ENCODE measurements at regions of chr17 and their contacts with region 1.

Region 1: GRCh38 chr17:29931231-29931932 is 1.4 kb upstream of the SSH2 start:
- DNase-seq: peak; percentile 82
- ATAC-seq: peak; percentile 69
- H3K4me3 Mint-ChIP-seq: no peak overlapping the region
- H3K27ac Mint-ChIP-seq: no peak overlapping the region
- H3K4me1 Mint-ChIP-seq: peaks cover 21% of the 10 kb centered on the region
- H3K27me3 Mint-ChIP-seq: no peaks in the 10 kb centered on the region

Region 2: GRCh38 chr17:29640413-29640812 is 291.0 kb before region 1 on chr17:
- CTCF ChIA-PET with region 1: interaction called, 37 read pairs
- DNase-seq: no peak
- ATAC-seq: no peak
- H3K4me3 Mint-ChIP-seq: no peak overlapping the region
- H3K27ac Mint-ChIP-seq: peak overlapping the region; percentile 42
- H3K4me1 Mint-ChIP-seq: peaks cover 21% of the 10 kb centered on the region
- H3K27me3 Mint-ChIP-seq: no peaks in the 10 kb centered on the region

Region 3: GRCh38 chr17:29802246-29802645 is 129.1 kb before region 1 on chr17:
- CTCF ChIA-PET with region 1: interaction called, 195 read pairs
- DNase-seq: no peak
- ATAC-seq: no peak
- H3K4me3 Mint-ChIP-seq: no peak overlapping the region
- H3K27ac Mint-ChIP-seq: no peak overlapping the region
- H3K4me1 Mint-ChIP-seq: no peaks in the 10 kb centered on the region
- H3K27me3 Mint-ChIP-seq: no peaks in the 10 kb centered on the region

Region 4: GRCh38 chr17:29835435-29836351 is 95.7 kb before region 1 on chr17:
- CTCF ChIA-PET with region 1: interaction called, 10 read pairs
- DNase-seq: no peak
- ATAC-seq: no peak
- H3K4me3 Mint-ChIP-seq: no peak overlapping the region
- H3K27ac Mint-ChIP-seq: no peak overlapping the region
- H3K4me1 Mint-ChIP-seq: no peaks in the 10 kb centered on the region
- H3K27me3 Mint-ChIP-seq: no peaks in the 10 kb centered on the region

Region 5: GRCh38 chr17:29911641-29912177 is 19.7 kb before region 1 on chr17:
- CTCF ChIA-PET with region 1: interaction called, 13 read pairs
- DNase-seq: no peak
- ATAC-seq: no peak
- H3K4me3 Mint-ChIP-seq: no peak overlapping the region
- H3K27ac Mint-ChIP-seq: no peak overlapping the region
- H3K4me1 Mint-ChIP-seq: peaks cover 10% of the 10 kb centered on the region
- H3K27me3 Mint-ChIP-seq: no peaks in the 10 kb centered on the region

Region 6: GRCh38 chr17:29958947-29959657 is 27.7 kb after region 1 on chr17:
- CTCF ChIA-PET with region 1: interaction called, 12 read pairs
- DNase-seq: no peak
- ATAC-seq: no peak
- H3K4me3 Mint-ChIP-seq: no peak overlapping the region
- H3K27ac Mint-ChIP-seq: no peak overlapping the region
- H3K4me1 Mint-ChIP-seq: no peaks in the 10 kb centered on the region
- H3K27me3 Mint-ChIP-seq: no peaks in the 10 kb centered on the region

Region 7: DNA sequence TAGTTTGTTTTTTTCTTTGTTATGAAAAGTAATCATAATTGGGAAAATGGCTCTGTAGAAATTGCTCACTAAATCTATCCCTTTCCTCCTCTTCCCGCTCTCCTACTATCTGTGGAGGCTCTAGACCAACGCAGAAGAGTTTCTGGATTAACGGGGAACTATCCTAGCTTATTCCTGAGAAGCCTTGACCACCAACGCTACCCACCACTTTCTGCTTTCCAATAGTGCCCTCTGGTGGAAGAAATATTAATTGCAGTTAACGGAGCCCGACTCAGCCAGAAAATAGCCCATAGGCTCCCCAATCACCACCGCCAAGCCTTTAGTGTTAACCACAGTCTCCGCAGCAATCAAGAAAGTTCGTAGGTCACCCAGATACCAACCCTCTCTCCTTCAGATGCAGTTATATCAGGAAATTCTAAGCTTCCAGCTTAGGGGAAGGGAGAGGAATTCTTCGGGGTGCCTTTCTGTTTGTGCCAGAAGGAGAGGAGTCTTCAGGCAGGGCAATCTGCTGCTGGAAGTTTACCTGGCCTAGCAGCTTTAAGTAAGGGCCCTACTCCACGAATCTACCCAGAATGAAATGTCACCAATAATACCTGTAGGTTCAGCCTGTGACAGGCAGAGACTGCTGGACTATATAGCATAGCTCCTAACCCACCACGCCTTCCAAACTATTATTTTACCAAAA is 162.2 kb after region 1 on chr17:
- CTCF ChIA-PET with region 1: interaction called, 10 read pairs
- DNase-seq: peak; percentile 62
- ATAC-seq: peak; percentile 72
- H3K4me3 Mint-ChIP-seq: no peak overlapping the region
- H3K27ac Mint-ChIP-seq: no peak overlapping the region
- H3K4me1 Mint-ChIP-seq: peaks cover 7% of the 10 kb centered on the region
- H3K27me3 Mint-ChIP-seq: peaks cover 42% of the 10 kb centered on the region